ENCODE measurements at regions of chr9 and their contacts with region 1.

Region 1: GRCh38 chr9:93962561-93963440 is 7.6 kb upstream of the BARX1 start:
- DNase-seq: peak; percentile 83
- H3K4me3 ChIP-seq: no peak overlapping the region
- H3K27ac ChIP-seq: no peak overlapping the region
- H3K4me1 ChIP-seq: peaks cover 18 to 33% (median 27%) of the 10 kb centered on the region in 4 donors
- H3K27me3 ChIP-seq: peaks cover 43% of the 10 kb centered on the region
- CTCF ChIP-seq: peak; percentile 77 to 85 (median 82)
- EP300 ChIP-seq: no peak
- POLR2A ChIP-seq: no peak

Region 2: GRCh38 chr9:93697352-93698139 is 265.3 kb before region 1 on chr9:
- in situ Hi-C with region 1: loop called in 2 of 4 experiments (anchors 10 to 25 kb)
- intact Hi-C with region 1: no loop called
- DNase-seq: no peak
- H3K4me3 ChIP-seq: no peak overlapping the region
- H3K27ac ChIP-seq: no peak overlapping the region
- H3K4me1 ChIP-seq: no peaks in the 10 kb centered on the region
- H3K27me3 ChIP-seq: no peaks in the 10 kb centered on the region
- CTCF ChIP-seq: no peak
- EP300 ChIP-seq: no peak
- POLR2A ChIP-seq: no peak

Measured in transverse colon (tissue), 4 donors.